ENCODE measurements at regions of chr1 and their contacts with region 1.

Region 1: DNA sequence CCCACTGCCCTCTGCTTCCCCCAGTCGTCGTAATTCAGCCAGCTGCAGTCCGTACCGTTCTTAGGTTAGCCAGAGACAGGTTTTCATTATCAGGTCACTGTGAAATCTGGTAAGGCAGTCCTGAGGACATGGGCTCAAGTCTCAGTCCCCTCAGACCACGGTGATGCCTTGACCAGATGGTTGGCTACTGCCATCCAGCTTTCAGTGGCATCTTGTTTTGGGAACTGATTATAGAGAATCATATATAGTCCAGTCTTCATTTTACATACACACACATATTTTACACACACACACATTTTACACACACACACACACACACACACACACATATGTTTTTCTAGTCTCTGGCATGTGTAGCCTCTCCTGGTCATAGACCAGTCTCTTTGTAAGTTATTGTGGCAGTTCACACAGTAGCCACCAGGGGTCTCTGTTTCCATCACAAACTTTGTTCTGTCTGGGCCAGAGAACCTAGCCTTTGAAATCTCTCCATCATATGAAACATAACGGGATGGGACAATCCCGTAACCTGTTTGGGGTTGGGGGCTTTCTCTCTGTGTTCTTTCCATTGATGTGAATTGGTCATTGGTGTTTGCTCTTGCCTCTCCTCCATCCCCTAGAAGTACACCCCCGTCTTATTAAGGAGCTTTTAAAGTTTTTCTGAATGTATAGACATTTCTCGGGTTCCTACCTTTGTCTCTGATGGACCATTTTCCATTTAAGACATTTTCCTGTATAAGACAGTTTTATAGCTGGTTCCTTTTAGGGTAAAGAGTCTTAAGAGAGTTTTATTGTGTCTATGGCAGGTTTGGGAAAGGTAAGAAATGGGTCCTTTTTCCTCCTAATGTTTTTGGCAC is 8.4 kb upstream of the IKBKE start:
- DNase-seq: peak; percentile 89
- H3K4me3 Mint-ChIP-seq: no peak overlapping the region
- H3K27ac Mint-ChIP-seq: peak overlapping the region; percentile 16
- H3K4me1 Mint-ChIP-seq: peaks cover 30% of the 10 kb centered on the region
- H3K27me3 Mint-ChIP-seq: peaks cover 8% of the 10 kb centered on the region
- CTCF ChIP-seq: peak; percentile 98

Region 2: DNA sequence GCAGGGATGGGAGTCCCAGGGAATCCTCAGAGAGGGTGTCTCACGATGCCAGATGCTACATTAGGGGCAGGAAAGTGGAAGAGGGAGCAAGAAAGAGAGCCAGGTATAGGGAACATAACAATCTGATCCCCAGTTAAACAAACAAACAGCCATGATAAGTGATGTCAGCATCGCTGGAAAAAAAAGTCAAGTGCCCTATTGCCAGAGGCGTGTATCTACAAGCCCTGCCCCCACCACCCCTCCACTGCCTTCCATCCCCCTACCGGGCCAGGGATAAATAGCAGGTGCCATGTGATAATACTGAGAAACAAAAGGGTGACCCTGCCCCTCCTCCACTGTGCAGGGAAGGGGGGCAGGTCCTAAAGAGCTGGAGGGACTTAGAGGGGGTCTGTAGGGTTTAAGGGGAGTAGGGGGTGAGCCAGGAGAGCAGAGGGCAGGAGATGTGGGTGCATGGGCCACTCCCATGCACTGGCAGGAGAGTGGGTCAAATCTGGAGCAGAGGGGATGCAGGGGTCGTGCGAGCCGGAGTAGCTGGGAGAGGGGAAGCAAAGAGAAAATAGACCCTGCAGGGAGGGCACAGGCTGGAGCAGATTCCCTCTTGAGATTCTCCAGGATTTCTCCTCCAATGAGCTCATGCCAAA is 522.0 kb before region 1 on chr1:
- CTCF ChIA-PET with region 1: no interaction called
- POLR2A ChIA-PET with region 1: no interaction called
- intact Hi-C with region 1: no loop called
- DNase-seq: peak; percentile 65
- H3K4me3 Mint-ChIP-seq: no peak overlapping the region
- H3K27ac Mint-ChIP-seq: no peak overlapping the region
- H3K4me1 Mint-ChIP-seq: peaks cover 29% of the 10 kb centered on the region
- H3K27me3 Mint-ChIP-seq: peaks cover 88% of the 10 kb centered on the region
- CTCF ChIP-seq: no peak

Region 3: GRCh38 chr1:206419250-206419649 is 42.6 kb before region 1 on chr1:
- CTCF ChIA-PET with region 1: interaction called, 10 read pairs
- POLR2A ChIA-PET with region 1: no interaction called
- intact Hi-C with region 1: no loop called
- DNase-seq: peak; percentile 78
- H3K4me3 Mint-ChIP-seq: no peak overlapping the region
- H3K27ac Mint-ChIP-seq: peak overlapping the region; percentile 84
- H3K4me1 Mint-ChIP-seq: peaks cover 14% of the 10 kb centered on the region
- H3K27me3 Mint-ChIP-seq: no peaks in the 10 kb centered on the region
- CTCF ChIP-seq: no peak

Region 4: GRCh38 chr1:206430031-206430983 is 31.5 kb before region 1 on chr1:
- CTCF ChIA-PET with region 1: interaction called, 15 read pairs
- POLR2A ChIA-PET with region 1: interaction called, 8 read pairs
- intact Hi-C with region 1: no loop called
- DNase-seq: peak; percentile 83
- H3K4me3 Mint-ChIP-seq: no peak overlapping the region
- H3K27ac Mint-ChIP-seq: peak overlapping the region; percentile 90
- H3K4me1 Mint-ChIP-seq: peaks cover 30% of the 10 kb centered on the region
- H3K27me3 Mint-ChIP-seq: no peaks in the 10 kb centered on the region
- CTCF ChIP-seq: peak; percentile 12

Region 5: DNA sequence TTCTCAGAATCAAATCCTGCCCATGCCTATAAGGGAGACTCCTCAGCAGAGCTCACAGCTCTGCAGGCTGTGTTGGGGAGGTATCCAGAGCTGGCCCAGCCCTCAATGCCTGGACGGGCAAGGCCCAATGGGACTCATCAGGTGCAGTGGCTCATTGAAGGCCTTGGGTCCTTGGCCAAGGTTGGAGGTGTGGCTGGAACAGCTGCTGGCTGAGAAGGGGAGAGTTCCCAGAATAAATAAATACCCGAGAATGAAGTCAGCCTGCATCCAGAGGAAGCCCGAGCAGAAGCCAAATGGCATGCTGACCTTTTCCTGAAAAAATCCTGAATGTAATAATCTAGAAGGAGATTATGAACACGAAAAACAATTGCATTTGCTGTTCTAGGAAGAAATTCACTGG is 16.7 kb before region 1 on chr1:
- CTCF ChIA-PET with region 1: interaction called, 34 read pairs
- POLR2A ChIA-PET with region 1: interaction called, 3 read pairs
- intact Hi-C with region 1: no loop called
- DNase-seq: no peak
- H3K4me3 Mint-ChIP-seq: no peak overlapping the region
- H3K27ac Mint-ChIP-seq: peak overlapping the region; percentile 43
- H3K4me1 Mint-ChIP-seq: peaks cover 14% of the 10 kb centered on the region
- H3K27me3 Mint-ChIP-seq: no peaks in the 10 kb centered on the region
- CTCF ChIP-seq: no peak

Region 6: GRCh38 chr1:206507284-206508129 is 45.7 kb after region 1 on chr1 and contains the start of gene RASSF5:
- CTCF ChIA-PET with region 1: interaction called, 17 read pairs
- POLR2A ChIA-PET with region 1: interaction called, 3 read pairs
- intact Hi-C with region 1: no loop called
- DNase-seq: peak; percentile 87
- H3K4me3 Mint-ChIP-seq: peak within 1 kb of the TSS; percentile 72
- H3K27ac Mint-ChIP-seq: peak within 1 kb of the TSS; percentile 72
- H3K4me1 Mint-ChIP-seq: peaks cover 74% of the 10 kb centered on the region
- H3K27me3 Mint-ChIP-seq: no peaks in the 10 kb centered on the region
- CTCF ChIP-seq: no peak
- total RNA-seq, gene RASSF5: 8.3 and 9.6 TPM in 2 replicates

Measured in MCF 10A (cell line).